ENCODE measurements at regions of chr20 and their contacts with region 1.

Region 1: GRCh38 chr20:47379433-47380150 is 23.1 kb upstream of the ZMYND8 start:
- DNase-seq: no peak
- ATAC-seq: no peak
- H3K4me3 ChIP-seq: no peak overlapping the region
- H3K4me3 Mint-ChIP-seq: peak overlapping the region in 1 of 10 donors; percentile 11
- H3K27ac ChIP-seq: no peak overlapping the region
- H3K27ac Mint-ChIP-seq: peak overlapping the region in 2 of 9 donors; percentile 52 to 73
- H3K4me1 ChIP-seq: peaks cover 0 to 6% of the 10 kb centered on the region in 2 donors
- H3K4me1 Mint-ChIP-seq: peaks cover 0 to 33% (median 10%) of the 10 kb centered on the region in 7 donors
- H3K27me3 ChIP-seq: peaks cover 0 to 2% of the 10 kb centered on the region in 2 donors
- H3K27me3 Mint-ChIP-seq: no peaks in the 10 kb centered on the region

Region 2: GRCh38 chr20:47220161-47220582 is 159.4 kb before region 1 on chr20:
- CTCF ChIA-PET with region 1: interaction called, 3 read pairs
- POLR2A ChIA-PET with region 1: no interaction called
- intact Hi-C with region 1: loop called (anchors 1 kb)
- DNase-seq: peak; percentile 8 to 41 (median 23)
- ATAC-seq: peak; percentile 59
- H3K4me3 ChIP-seq: no peak overlapping the region
- H3K4me3 Mint-ChIP-seq: no peak overlapping the region
- H3K27ac ChIP-seq: no peak overlapping the region
- H3K27ac Mint-ChIP-seq: peak overlapping the region in 3 of 9 donors; percentile 34 to 85 (median 46)
- H3K4me1 ChIP-seq: no peaks in the 10 kb centered on the region
- H3K4me1 Mint-ChIP-seq: peaks cover 0 to 17% (median 12%) of the 10 kb centered on the region in 7 donors
- H3K27me3 ChIP-seq: no peaks in the 10 kb centered on the region
- H3K27me3 Mint-ChIP-seq: no peaks in the 10 kb centered on the region

Region 3: GRCh38 chr20:47296950-47297349 is 82.6 kb before region 1 on chr20:
- CTCF ChIA-PET with region 1: interaction called, 31 read pairs
- POLR2A ChIA-PET with region 1: no interaction called
- intact Hi-C with region 1: loop called in 1 of 2 experiments (anchors 1 kb)
- DNase-seq: peak in 2 of 9 donors; percentile 7 to 23
- ATAC-seq: no peak
- H3K4me3 ChIP-seq: no peak overlapping the region
- H3K4me3 Mint-ChIP-seq: no peak overlapping the region
- H3K27ac ChIP-seq: no peak overlapping the region
- H3K27ac Mint-ChIP-seq: peak overlapping the region in 3 of 9 donors; percentile 1 to 59 (median 38)
- H3K4me1 ChIP-seq: no peaks in the 10 kb centered on the region
- H3K4me1 Mint-ChIP-seq: peaks cover 0 to 17% (median 3%) of the 10 kb centered on the region in 7 donors
- H3K27me3 ChIP-seq: no peaks in the 10 kb centered on the region
- H3K27me3 Mint-ChIP-seq: no peaks in the 10 kb centered on the region

Region 4: GRCh38 chr20:47356526-47357295 is 22.9 kb before region 1 on chr20 and contains the start of gene ZMYND8:
- CTCF ChIA-PET with region 1: interaction called, 21 read pairs
- POLR2A ChIA-PET with region 1: interaction called, 10 read pairs
- intact Hi-C with region 1: loop called (anchors 2 kb)
- DNase-seq: peak; percentile 88 to 100 (median 98)
- ATAC-seq: peak; percentile 91
- H3K4me3 ChIP-seq: peak within 1 kb of the TSS; percentile 75
- H3K4me3 Mint-ChIP-seq: peak within 1 kb of the TSS in 4 of 10 donors; percentile 88 to 95 (median 92)
- H3K27ac ChIP-seq: peak within 1 kb of the TSS; percentile 86
- H3K27ac Mint-ChIP-seq: peak within 1 kb of the TSS in 7 of 9 donors; percentile 97 to 100 (median 99)
- H3K4me1 ChIP-seq: peaks cover 47 to 65% of the 10 kb centered on the region in 2 donors
- H3K4me1 Mint-ChIP-seq: peaks cover 51 to 74% (median 53%) of the 10 kb centered on the region in 7 donors
- H3K27me3 ChIP-seq: no peaks in the 10 kb centered on the region
- H3K27me3 Mint-ChIP-seq: no peaks in the 10 kb centered on the region
- total RNA-seq, gene ZMYND8: 54.5 to 83.0 (median 68.5) TPM

Region 5: DNA sequence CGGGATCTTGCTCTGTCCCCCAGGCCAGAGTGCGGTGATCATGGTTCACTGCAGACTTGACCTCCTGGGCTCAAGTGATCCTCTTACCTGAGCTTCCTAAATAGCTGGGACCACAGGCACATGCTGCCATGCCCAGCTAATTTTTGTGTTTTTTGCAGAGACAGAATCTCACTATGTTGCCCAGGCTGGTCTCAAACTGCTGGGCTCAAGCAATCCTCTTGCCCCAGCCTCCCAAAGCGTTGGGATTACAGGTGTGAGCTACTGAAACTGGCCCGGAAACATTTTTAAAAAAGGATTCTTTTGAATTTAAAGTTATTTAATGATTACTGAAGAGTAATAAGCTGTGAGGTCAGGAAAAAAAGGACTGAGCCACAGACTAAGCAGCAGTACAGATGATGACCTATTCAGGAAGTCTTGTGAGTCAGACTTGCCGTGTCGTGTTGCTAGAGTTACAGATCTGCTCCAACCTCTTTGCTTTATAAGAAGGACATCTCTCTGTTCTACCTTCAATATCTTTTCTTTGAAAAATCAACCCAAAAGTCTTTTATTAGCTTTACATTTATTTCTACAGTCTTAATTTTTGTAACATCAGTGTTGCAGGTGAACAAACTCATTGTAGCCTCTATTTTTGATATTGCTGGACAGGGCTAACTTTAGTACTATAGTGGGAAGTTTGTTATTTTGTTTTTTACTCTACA is 230.8 kb after region 1 on chr20:
- CTCF ChIA-PET with region 1: interaction called, 15 read pairs
- POLR2A ChIA-PET with region 1: no interaction called
- intact Hi-C with region 1: no loop called
- DNase-seq: peak in 4 of 9 donors; percentile 5 to 68 (median 32)
- ATAC-seq: peak; percentile 89
- H3K4me3 ChIP-seq: no peak overlapping the region
- H3K4me3 Mint-ChIP-seq: peak overlapping the region in 8 of 10 donors; percentile 1 to 83 (median 39)
- H3K27ac ChIP-seq: peak overlapping the region; percentile 17
- H3K27ac Mint-ChIP-seq: peak overlapping the region; percentile 65 to 96 (median 86)
- H3K4me1 ChIP-seq: peaks cover 26 to 38% of the 10 kb centered on the region in 2 donors
- H3K4me1 Mint-ChIP-seq: peaks cover 40 to 83% (median 77%) of the 10 kb centered on the region in 7 donors
- H3K27me3 ChIP-seq: no peaks in the 10 kb centered on the region
- H3K27me3 Mint-ChIP-seq: no peaks in the 10 kb centered on the region

Region 6: DNA sequence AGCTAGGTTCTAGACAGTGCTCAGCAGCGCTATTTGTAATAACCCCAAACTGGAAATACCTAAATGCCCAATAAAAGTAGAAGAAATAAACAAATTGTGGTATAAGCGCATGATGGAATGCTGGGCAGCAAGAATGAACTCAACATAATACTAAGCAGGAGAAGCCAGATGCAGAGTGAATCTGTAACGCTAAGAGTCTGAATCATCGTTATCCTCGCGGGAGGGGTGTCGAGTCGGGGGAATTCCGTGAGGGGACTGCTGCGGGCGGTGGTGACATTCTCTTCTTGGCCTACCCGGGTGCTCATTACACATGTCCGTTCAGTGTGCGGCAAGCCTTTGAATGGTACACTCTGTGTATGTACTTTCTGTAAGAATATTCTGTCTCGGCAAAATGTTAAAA is 322.0 kb after region 1 on chr20:
- CTCF ChIA-PET with region 1: no interaction called
- POLR2A ChIA-PET with region 1: no interaction called
- intact Hi-C with region 1: no loop called
- DNase-seq: no peak
- ATAC-seq: no peak
- H3K4me3 ChIP-seq: no peak overlapping the region
- H3K4me3 Mint-ChIP-seq: no peak overlapping the region
- H3K27ac ChIP-seq: no peak overlapping the region
- H3K27ac Mint-ChIP-seq: no peak overlapping the region
- H3K4me1 ChIP-seq: no peaks in the 10 kb centered on the region
- H3K4me1 Mint-ChIP-seq: no peaks in the 10 kb centered on the region
- H3K27me3 ChIP-seq: no peaks in the 10 kb centered on the region
- H3K27me3 Mint-ChIP-seq: peaks cover 0 to 10% (median 0%) of the 10 kb centered on the region in 5 donors

Measured in naive thymus-derived CD4-positive, alpha-beta T cell (primary cell).